ENCODE measurements at regions of chr14 and their contacts with region 1.

Region 1: GRCh38 chr14:73825551-73826188 is 26.0 kb upstream of the PTGR2 start:
- DNase-seq: peak; percentile 84
- CTCF ChIP-seq: peak; percentile 86

Region 2: DNA sequence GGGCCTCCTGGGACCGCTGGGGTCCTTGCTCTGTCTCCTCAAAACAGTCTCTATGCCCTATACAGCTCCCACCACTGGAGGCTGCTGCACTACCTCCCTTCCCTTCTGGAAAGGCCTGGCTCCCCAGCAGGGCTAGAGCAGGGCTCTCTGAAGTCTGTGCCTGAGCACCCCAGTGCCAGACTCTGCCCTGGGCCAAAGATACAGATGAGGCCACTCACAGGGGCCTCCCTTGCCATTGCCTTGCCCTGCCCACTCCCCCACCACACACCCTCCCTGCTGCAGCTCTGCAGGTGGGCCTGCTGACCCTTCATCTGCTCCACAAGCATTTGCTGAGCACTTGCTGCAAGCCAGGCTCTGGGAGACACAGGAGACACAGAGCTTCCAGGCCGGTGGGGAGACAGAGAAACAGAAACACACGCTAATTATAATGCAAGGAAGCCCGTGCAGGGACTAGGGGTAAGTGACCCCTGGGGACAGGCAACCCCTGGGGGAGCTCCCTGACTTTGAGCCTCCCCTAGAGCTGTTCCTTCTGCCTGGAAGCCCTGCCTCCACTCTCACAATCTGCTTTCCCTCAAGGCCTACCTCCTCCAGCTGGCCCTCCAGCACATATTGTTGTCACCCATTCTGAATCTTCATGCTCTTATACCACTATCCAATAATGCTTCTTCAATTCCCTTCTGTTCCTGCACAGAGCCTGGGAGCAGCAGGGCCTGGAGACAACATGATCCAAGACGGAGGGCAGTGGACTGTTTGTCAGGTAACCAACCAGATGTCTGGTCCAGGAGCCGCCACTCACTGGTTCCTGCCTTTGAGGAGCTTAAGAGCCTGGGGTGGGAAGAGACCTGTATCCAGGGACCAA is 78.9 kb before region 1 on chr14:
- CTCF ChIA-PET with region 1: interaction called, 46 read pairs
- POLR2A ChIA-PET with region 1: interaction called, 4 read pairs
- DNase-seq: no peak
- CTCF ChIP-seq: peak; percentile 21

Region 3: GRCh38 chr14:73753959-73754882 is 71.4 kb before region 1 on chr14:
- CTCF ChIA-PET with region 1: interaction called, 46 read pairs
- POLR2A ChIA-PET with region 1: no interaction called
- DNase-seq: peak; percentile 73
- CTCF ChIP-seq: no peak

Region 4: GRCh38 chr14:73795972-73796371 is 29.7 kb before region 1 on chr14:
- CTCF ChIA-PET with region 1: interaction called, 13 read pairs
- POLR2A ChIA-PET with region 1: no interaction called
- DNase-seq: no peak
- CTCF ChIP-seq: no peak

Region 5: DNA sequence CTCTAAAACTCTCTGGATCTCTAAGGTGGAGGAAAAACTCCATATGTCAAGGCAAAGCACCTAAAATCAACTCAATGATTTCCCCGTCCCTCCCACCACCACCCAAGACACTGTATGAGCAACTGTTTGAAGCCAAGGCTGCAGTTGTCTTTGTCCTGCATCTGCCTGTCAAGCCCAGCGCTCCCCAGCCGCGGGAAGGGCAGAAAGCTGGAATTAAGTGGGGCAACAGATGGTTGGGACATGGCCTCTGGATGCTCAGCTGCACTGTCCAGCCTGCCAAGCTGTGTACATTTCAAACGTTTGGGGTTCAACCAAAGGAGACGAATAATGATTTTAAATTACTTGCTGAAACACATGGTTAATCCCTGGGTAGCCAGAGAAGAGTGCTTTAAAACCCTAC is 16.3 kb before region 1 on chr14:
- CTCF ChIA-PET with region 1: interaction called, 14 read pairs
- POLR2A ChIA-PET with region 1: interaction called, 4 read pairs
- DNase-seq: no peak
- CTCF ChIP-seq: no peak

Region 6: DNA sequence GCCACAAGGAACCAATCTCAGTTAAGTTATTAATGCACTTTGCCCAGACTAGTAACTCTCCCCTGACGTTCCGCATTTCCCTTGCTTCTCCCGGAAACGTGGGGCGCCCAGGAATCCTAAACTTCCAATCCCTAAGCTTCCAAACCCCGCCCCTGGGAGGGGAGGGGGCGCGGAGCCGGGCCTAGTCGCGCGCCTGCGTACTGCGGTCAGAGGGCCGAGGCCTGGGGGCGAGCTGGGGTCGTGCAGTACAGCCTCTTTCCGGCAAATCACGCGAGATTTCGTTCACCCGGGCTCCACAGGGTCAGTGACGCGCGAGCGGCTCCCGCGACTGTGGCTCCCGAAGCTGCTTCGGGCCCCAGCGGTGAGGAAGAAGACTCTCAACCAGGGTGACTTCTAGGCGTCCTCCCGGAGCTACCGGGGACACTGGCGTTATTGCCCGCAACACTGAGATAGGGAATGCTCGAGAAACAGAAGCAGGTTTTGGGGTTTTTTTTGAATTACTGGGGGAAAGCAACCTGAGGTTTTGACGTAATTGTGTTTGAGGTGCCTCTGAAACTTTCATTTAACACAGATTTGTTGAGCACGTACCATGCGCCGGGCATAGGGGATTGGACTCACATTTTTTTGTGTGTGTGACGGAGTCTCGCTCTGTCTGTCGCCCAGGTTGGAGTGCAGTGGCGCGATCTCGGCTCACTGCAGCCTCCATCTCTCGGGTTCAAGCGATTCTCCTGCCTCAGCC is 26.1 kb after region 1 on chr14 and contains the start of gene PTGR2:
- CTCF ChIA-PET with region 1: interaction called, 15 read pairs
- POLR2A ChIA-PET with region 1: no interaction called
- DNase-seq: peak; percentile 97
- CTCF ChIP-seq: no peak

Measured in GM10248 (cell line).